OCI-LY7 (cell line): ENCODE measurements at regions of chr5 and their contacts with region 1.

Region 1: DNA sequence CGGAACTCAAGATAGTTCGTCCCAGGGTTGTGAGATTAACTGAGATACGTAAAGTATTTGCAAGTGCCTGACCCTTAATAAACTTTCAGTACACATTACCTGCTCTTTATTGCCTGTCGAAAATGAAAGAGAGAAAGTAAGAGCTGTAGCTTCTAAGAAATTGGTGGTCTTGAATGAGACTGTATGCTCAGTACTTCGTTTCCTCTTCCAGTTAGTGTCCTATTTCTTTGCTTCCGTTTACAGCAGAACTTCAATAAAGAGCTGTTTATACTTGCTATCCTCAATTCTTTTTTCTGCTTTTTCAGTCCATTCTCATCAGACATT is 534 bp downstream of the SRFBP1 start:
- DNase-seq: no peak
- H3K4me3 ChIP-seq: peak overlapping the region; percentile 97
- H3K27ac ChIP-seq: peak overlapping the region; percentile 63
- H3K4me1 ChIP-seq: peaks cover 19% of the 10 kb centered on the region
- CTCF ChIP-seq: no peak

Region 2: GRCh38 chr5:121974261-121974660 is 12.0 kb after region 1 on chr5:
- CTCF ChIA-PET with region 1: no interaction called
- POLR2A ChIA-PET with region 1: interaction called, 11 read pairs
- intact Hi-C with region 1: no loop called
- DNase-seq: no peak
- H3K4me3 ChIP-seq: no peak overlapping the region
- H3K27ac ChIP-seq: no peak overlapping the region
- H3K4me1 ChIP-seq: no peaks in the 10 kb centered on the region
- CTCF ChIP-seq: no peak

Region 3: DNA sequence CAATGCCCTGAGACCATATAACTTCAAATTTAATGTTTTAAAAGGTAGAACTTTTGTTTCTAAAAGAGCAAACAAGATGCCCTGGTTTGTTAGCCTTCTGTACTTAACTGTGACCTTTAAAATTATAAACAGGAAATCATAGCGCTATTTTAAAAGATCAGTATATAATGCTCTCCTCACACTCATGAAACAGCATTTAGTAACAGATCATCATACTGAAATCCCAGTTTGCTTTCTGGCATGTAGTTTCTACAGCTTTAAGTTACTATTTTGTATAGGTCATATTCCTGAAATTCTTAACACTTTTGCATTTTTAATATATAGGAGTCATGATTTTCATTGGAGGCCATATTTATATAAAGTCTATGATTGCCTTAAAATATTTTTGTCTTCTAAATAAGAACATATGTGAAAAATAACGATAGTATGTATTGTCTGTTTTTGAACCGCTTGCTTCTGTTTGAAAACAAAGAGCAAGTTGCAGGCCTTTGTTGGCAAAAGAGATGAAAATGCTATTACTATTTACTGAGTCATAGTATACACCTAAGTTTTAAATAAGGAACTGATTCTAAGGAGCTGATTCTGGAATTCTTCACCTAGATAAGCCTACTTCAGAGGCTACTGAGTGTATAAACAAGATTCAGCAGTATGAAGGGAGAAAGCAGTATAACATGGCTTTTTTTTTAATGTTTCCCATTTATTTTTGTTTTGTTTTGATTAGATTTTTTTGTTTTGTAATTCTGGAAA is 20.0 kb after region 1 on chr5:
- CTCF ChIA-PET with region 1: no interaction called
- POLR2A ChIA-PET with region 1: interaction called, 17 read pairs
- intact Hi-C with region 1: no loop called
- DNase-seq: no peak
- H3K4me3 ChIP-seq: no peak overlapping the region
- H3K27ac ChIP-seq: peak overlapping the region; percentile 6
- H3K4me1 ChIP-seq: peaks cover 23% of the 10 kb centered on the region
- CTCF ChIP-seq: no peak

Region 4: GRCh38 chr5:122118356-122118948 is 156.1 kb after region 1 on chr5:
- CTCF ChIA-PET with region 1: no interaction called
- POLR2A ChIA-PET with region 1: no interaction called
- intact Hi-C with region 1: no loop called
- DNase-seq: no peak
- H3K4me3 ChIP-seq: no peak overlapping the region
- H3K27ac ChIP-seq: no peak overlapping the region
- H3K4me1 ChIP-seq: no peaks in the 10 kb centered on the region
- CTCF ChIP-seq: no peak